ENCODE measurements at regions of chr10 and their contacts with region 1.

Region 1: GRCh38 chr10:11270135-11270857 is 252.6 kb downstream of the CELF2 start:
- DNase-seq: peak; percentile 71
- CTCF ChIP-seq: peak; percentile 93

Region 2: GRCh38 chr10:10279906-10280305 is 990.4 kb before region 1 on chr10:
- CTCF ChIA-PET with region 1: no interaction called
- POLR2A ChIA-PET with region 1: no interaction called
- DNase-seq: no peak
- CTCF ChIP-seq: no peak

Region 3: DNA sequence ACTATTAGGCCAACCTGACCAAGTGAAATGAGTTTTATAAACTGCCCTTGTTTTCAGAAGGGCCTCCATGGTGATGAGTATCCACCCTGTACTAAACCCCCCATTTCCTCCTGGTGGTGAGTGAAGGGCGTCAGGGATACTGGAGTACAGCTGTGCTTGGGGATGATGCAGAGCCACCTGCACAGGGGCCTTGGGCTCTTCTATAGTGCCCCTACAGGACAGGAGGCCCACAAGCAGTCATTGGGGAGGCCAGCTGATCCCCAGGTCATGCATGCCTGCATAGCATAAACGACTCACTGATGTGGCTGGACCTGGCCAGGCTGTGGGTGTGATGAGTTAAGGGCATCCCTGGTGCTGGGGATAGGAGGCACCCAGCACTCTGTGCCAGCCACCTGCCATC is 366.7 kb before region 1 on chr10:
- CTCF ChIA-PET with region 1: no interaction called
- POLR2A ChIA-PET with region 1: no interaction called
- DNase-seq: no peak
- CTCF ChIP-seq: no peak

Region 4: GRCh38 chr10:10996966-10997620 is 273.2 kb before region 1 on chr10:
- CTCF ChIA-PET with region 1: no interaction called
- POLR2A ChIA-PET with region 1: no interaction called
- DNase-seq: no peak
- CTCF ChIP-seq: no peak

Region 5: DNA sequence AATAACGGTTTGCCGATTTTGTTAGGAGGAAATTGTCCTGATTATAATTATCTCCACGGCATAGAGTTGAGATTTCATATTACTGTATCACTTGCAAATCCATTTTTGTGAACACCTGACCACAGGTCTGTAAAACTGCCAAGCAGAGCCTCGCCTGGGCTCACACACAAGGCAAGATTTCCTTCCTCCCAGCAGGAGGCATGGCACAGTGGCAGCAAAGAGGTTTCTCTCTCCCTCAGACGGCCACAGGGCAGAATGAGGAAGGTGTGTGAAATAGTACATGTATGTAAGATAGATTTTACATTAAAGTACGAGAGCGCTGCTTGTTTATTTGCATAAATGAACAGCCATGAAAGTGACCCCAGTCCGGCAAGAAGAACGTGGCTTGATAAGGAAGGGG is 122.6 kb before region 1 on chr10:
- CTCF ChIA-PET with region 1: interaction called, 20 read pairs
- POLR2A ChIA-PET with region 1: no interaction called
- DNase-seq: no peak
- CTCF ChIP-seq: no peak

Region 6: DNA sequence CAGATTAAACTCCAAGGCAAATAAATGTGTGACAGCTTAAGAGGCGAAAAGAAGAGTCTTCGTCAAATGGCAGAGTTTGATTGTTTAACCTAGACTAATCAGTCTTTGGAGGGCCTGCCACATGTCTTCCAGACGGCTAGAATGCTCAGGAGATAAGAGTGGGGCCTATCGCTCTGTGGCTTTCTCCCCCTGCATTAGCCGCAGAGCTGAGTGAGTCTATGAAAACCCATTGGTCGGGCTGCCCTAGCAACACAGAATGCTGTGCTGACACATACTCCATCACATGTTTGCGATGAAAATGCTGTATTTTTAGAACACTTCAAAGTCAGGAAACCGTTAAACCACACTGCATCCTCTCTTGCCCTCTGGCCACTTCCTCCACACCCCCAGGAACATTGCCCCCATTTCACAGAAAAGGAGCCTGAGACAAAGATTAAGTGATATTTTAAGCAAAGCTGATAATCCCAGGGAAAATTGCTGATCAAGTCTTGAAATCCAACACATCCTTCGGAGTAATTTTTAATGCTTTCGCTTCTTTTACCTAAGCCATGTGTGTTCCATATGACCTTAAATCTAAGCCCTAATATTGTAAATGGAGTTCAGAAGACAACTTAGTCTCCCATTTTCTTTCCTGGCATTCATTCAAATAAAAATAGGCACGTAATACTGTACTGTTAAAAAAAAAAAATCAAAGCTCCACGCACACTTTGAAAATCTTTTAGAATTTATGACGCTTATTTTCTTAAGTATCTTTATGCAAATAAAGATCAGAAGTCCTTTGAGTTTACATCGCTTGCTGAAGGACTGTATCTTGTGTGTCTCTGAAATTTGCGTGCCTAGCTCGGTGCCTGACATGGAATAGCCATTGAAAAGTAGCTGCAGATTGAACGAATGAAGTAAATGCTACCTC is 91.4 kb before region 1 on chr10:
- CTCF ChIA-PET with region 1: interaction called, 24 read pairs
- POLR2A ChIA-PET with region 1: no interaction called
- DNase-seq: peak; percentile 79
- CTCF ChIP-seq: no peak

Region 7: DNA sequence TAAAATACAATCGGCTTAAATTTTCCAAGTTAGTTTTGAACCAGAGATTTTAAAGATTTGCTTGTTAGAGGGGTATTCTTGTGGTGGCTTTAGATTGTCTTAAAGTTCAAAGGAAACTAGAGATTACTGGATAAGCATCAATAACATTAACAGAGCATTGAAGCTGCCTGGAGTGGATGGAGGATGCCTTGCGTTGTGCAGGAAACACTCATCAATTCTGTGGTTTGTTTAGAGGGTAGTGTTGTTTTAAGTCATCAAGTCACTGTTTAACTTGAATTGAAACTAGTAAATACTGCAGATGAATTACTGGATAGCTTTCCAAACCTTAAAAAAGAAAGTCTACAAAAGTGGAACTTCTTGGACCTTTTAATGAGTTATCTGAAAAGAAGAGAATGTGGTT is 34.1 kb before region 1 on chr10:
- CTCF ChIA-PET with region 1: interaction called, 63 read pairs
- POLR2A ChIA-PET with region 1: no interaction called
- DNase-seq: no peak
- CTCF ChIP-seq: no peak

Region 8: DNA sequence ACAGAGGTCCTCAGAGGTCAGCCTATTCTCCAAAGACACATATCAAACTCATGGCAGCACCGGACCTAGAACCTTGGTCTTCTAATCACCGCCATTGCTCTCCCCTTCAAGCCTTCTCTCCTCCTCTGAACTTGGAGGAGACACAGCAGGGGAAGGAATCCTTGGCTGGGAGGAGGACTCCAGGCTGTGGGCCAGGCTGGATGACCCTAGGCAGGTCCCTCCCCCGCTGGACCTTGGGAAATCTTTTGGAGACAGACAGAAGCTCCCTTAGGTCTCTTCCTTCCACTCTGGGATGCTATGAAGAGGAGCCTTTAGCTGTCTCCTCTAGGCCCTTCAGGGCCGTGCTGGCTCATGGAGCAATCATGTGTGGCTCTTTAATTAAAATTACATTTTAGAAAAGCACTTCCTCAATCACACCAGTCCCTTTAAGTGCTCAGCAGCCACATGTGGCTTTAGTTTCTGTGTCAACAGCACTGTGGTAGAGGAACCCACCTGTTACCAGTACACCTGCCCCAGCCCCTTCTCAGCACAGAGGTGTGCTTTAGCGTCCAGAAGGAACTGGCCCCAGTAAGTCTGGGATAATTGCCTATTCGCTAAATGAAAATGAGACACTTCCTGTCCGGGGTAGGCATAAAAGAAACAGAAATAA is 14.4 kb before region 1 on chr10:
- CTCF ChIA-PET with region 1: interaction called, 48 read pairs
- POLR2A ChIA-PET with region 1: interaction called, 6 read pairs
- DNase-seq: no peak
- CTCF ChIP-seq: no peak

Region 9: DNA sequence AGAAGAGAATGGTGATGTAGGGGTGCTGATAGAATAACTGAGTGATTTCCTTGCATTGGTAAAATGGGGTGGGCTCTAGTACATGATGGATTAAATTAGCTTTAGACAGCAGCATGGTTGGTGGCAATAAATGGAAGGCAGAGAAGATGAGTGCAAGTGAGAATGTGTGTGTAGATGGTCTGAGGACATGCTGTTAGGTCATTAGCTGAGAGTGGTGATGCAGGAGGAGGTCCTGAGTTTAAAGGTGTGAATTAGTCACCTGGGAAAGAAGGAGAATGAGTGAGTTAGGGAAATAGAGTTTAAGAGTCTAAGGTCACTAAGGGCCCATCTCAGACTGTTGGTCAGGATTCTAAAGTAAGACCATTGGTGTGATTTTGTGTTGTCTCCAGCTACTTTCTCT is 841.2 kb after region 1 on chr10:
- CTCF ChIA-PET with region 1: no interaction called
- POLR2A ChIA-PET with region 1: no interaction called
- DNase-seq: no peak
- CTCF ChIP-seq: no peak